Activated naive CD4-positive, alpha-beta T cell treated with anti-CD3 and anti-CD28 coated beads for 36 hours (primary cell): ENCODE measurements at regions of chr10 and their contacts with region 1.

Region 1: GRCh38 chr10:15122477-15123030 is 25.4 kb downstream of the RPP38 start:
- DNase-seq: peak; percentile 59
- H3K4me3 Mint-ChIP-seq: no peak overlapping the region
- H3K27ac Mint-ChIP-seq: peak overlapping the region; percentile 86
- H3K4me1 Mint-ChIP-seq: peaks cover 32% of the 10 kb centered on the region
- H3K27me3 Mint-ChIP-seq: no peaks in the 10 kb centered on the region

Region 2: GRCh38 chr10:14507176-14507575 is 615.4 kb before region 1 on chr10:
- CTCF ChIA-PET with region 1: no interaction called
- intact Hi-C with region 1: loop called (anchors 5 kb)
- DNase-seq: peak; percentile 76
- H3K4me3 Mint-ChIP-seq: no peak overlapping the region
- H3K27ac Mint-ChIP-seq: peak overlapping the region; percentile 59
- H3K4me1 Mint-ChIP-seq: peaks cover 42% of the 10 kb centered on the region
- H3K27me3 Mint-ChIP-seq: no peaks in the 10 kb centered on the region

Region 3: GRCh38 chr10:15097011-15097812 is 25.3 kb before region 1 on chr10 and contains the start of gene RPP38:
- CTCF ChIA-PET with region 1: no interaction called
- intact Hi-C with region 1: loop called (anchors 1 kb)
- DNase-seq: peak; percentile 96
- H3K4me3 Mint-ChIP-seq: peak within 1 kb of the TSS; percentile 97
- H3K27ac Mint-ChIP-seq: peak within 1 kb of the TSS; percentile 94
- H3K4me1 Mint-ChIP-seq: peaks cover 36% of the 10 kb centered on the region
- H3K27me3 Mint-ChIP-seq: no peaks in the 10 kb centered on the region
- total RNA-seq, gene RPP38: 15.6 to 16.3 TPM

Region 4: GRCh38 chr10:15106352-15107013 is 16.1 kb before region 1 on chr10:
- CTCF ChIA-PET with region 1: interaction called, 11 read pairs
- intact Hi-C with region 1: no loop called
- DNase-seq: peak; percentile 85
- H3K4me3 Mint-ChIP-seq: no peak overlapping the region
- H3K27ac Mint-ChIP-seq: peak overlapping the region; percentile 39
- H3K4me1 Mint-ChIP-seq: peaks cover 12% of the 10 kb centered on the region
- H3K27me3 Mint-ChIP-seq: no peaks in the 10 kb centered on the region

Region 5: DNA sequence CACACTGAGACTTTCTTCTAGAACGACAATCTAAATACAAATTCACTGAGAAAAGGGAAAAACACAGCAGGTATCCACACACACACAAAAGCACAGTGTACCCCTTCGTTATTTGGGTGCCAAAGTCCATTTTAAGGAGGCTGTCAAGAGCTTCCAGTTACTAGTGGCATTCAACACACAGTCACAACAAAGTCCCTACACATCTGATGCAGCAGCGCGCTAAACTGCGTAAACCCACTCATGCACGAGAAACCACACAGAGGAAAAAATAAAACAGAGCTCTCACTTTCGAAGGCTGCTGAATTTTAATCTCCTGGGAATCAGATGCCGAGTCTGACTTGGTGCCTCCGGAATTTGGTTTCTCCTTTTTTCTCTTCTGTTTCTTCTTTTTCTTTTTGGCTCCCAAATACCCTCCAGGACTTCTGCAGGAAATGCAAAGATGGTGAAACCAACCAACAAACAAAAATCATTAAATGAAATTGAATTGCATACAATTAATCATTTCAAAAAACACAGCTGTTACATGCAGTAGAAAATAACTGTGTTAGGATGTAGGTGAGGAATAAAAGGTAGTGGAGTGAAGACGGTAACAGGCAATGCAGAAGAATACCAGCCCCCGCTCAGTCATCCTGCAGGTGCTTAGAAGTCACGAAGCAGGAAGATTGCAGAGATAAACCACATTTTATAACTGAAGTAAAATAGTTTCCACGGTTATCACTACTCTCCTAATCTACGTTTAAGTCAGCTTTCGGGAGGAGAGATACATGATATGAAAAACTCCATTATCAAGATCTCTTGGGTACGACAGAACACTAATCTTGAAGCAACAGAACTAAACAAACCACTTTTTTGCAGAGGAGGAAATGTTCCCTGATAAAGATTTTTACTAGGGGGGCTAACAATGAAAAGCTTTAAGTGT is 18.8 kb after region 1 on chr10:
- CTCF ChIA-PET with region 1: interaction called, 12 read pairs
- intact Hi-C with region 1: loop called (anchors 1 kb)
- DNase-seq: peak; percentile 59
- H3K4me3 Mint-ChIP-seq: peak overlapping the region; percentile 67
- H3K27ac Mint-ChIP-seq: peak overlapping the region; percentile 25
- H3K4me1 Mint-ChIP-seq: peaks cover 38% of the 10 kb centered on the region
- H3K27me3 Mint-ChIP-seq: no peaks in the 10 kb centered on the region

Region 6: DNA sequence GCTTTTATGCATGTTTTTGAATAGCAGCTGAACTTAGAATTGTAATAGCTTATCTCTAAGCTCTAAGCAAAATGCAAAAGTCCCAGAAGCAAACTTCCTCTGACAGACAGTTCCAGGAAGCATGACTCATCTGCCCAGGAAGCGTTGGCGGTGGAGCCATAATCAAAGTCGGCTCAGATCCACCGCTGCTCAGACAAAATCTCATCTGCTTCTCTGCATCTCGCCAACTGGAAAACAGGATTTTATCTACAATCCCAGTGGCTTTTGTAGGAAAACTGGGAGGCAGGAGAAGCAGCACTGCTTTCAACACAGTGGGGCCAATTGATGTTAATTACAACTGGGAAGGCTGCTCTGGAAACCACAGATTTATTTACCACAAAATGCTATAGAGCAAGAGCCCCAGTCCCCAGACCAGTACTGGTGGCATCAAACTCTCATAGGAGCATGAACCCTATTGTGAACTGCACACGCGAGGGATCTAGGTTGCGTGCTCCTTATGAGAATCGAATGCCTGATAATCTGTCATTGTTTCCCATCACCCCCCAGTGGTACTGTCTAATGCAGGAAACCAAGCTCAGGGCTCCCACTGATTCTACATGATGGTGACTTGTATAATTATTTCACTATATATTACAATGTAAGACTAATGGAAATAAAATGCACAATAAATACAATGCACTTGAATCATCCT is 1907.2 kb after region 1 on chr10:
- CTCF ChIA-PET with region 1: no interaction called
- intact Hi-C with region 1: loop called (anchors 5 kb)
- DNase-seq: peak; percentile 94
- H3K4me3 Mint-ChIP-seq: peak overlapping the region; percentile 61
- H3K27ac Mint-ChIP-seq: peak overlapping the region; percentile 83
- H3K4me1 Mint-ChIP-seq: peaks cover 69% of the 10 kb centered on the region
- H3K27me3 Mint-ChIP-seq: no peaks in the 10 kb centered on the region